ENCODE measurements at regions of chr2 and their contacts with region 1.

Region 1: DNA sequence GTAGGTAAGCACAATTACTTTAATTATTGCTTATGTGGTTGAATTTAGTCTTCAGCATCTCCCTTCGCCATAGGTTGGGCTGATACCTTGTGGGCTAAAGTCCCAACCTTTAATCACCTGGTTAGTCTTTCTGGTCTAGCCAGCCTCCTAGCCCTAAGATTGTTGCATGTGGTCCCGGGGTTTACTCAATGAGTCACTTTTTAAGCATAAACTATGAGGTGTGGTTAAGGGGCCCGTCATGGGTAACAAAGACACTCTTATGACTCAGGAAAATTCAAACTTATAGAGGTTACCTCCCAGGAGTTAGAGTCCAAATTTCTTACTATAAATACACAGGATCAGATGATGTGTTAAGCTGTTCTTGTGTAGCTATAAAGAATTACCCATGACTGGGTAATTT is 841.6 kb downstream of the TRIB2 start:
- DNase-seq: peak; percentile 95
- ATAC-seq: peak; percentile 97
- H3K4me3 ChIP-seq: no peak overlapping the region
- H3K27ac ChIP-seq: peak overlapping the region; percentile 96
- H3K4me1 ChIP-seq: peaks cover 24% of the 10 kb centered on the region
- H3K27me3 ChIP-seq: no peaks in the 10 kb centered on the region
- CTCF ChIP-seq: no peak

Region 2: DNA sequence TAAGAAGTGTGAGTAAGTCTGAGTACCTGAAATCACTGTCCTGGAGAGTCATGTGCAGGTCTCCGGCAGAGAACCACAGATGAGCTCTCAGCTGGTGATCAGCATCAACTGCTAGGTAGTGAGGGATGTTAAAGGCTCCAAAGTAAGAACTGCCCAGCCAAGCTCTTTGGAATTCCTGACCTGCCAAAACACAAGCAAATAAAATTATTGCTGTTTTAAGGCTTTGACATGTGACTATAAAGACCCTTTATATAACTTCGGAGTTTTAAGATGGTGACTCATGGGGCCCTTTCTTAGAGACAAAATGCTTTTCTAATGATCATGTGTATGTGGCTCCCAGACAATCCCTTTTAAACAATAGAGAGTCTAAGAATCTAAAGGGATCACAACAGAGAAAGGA is 14.1 kb after region 1 on chr2:
- CTCF ChIA-PET with region 1: no interaction called
- POLR2A ChIA-PET with region 1: no interaction called
- intact Hi-C with region 1: loop called (anchors 1 kb)
- DNase-seq: peak; percentile 58
- ATAC-seq: peak; percentile 75
- H3K4me3 ChIP-seq: no peak overlapping the region
- H3K27ac ChIP-seq: no peak overlapping the region
- H3K4me1 ChIP-seq: peaks cover 7% of the 10 kb centered on the region
- H3K27me3 ChIP-seq: no peaks in the 10 kb centered on the region
- CTCF ChIP-seq: no peak

Region 3: DNA sequence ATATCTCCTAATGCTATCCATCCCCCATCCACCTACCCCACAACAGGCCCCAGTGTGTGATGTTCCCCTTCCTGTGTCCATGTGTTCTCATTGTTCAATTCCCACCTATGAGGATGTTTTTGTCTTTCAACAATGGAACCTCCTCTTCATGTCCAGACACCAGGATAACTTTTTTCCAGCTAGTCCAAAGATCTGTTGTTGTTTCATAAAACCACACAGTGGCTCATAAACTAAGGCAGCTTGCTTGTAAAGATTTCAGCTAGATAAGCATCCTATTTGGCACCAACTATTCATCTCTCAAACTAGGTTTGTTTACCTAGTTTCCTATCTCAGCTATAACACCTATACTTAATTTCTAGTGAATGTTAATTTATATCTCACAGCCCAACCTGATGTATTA is 96.0 kb after region 1 on chr2:
- CTCF ChIA-PET with region 1: no interaction called
- POLR2A ChIA-PET with region 1: no interaction called
- intact Hi-C with region 1: loop called (anchors 1 kb)
- DNase-seq: peak; percentile 88
- ATAC-seq: peak; percentile 62
- H3K4me3 ChIP-seq: no peak overlapping the region
- H3K27ac ChIP-seq: no peak overlapping the region
- H3K4me1 ChIP-seq: peaks cover 24% of the 10 kb centered on the region
- H3K27me3 ChIP-seq: no peaks in the 10 kb centered on the region
- CTCF ChIP-seq: no peak

Measured in PC-3 (cell line).